Right ventricle myocardium inferior (tissue), 1 donor: ENCODE measurements at regions of chr10 and their contacts with region 1.

Region 1: GRCh38 chr10:132223156-132223590 is 36.4 kb downstream of the DPYSL4 start:
- DNase-seq: peak; percentile 85
- ATAC-seq: peak; percentile 92

Region 2: DNA sequence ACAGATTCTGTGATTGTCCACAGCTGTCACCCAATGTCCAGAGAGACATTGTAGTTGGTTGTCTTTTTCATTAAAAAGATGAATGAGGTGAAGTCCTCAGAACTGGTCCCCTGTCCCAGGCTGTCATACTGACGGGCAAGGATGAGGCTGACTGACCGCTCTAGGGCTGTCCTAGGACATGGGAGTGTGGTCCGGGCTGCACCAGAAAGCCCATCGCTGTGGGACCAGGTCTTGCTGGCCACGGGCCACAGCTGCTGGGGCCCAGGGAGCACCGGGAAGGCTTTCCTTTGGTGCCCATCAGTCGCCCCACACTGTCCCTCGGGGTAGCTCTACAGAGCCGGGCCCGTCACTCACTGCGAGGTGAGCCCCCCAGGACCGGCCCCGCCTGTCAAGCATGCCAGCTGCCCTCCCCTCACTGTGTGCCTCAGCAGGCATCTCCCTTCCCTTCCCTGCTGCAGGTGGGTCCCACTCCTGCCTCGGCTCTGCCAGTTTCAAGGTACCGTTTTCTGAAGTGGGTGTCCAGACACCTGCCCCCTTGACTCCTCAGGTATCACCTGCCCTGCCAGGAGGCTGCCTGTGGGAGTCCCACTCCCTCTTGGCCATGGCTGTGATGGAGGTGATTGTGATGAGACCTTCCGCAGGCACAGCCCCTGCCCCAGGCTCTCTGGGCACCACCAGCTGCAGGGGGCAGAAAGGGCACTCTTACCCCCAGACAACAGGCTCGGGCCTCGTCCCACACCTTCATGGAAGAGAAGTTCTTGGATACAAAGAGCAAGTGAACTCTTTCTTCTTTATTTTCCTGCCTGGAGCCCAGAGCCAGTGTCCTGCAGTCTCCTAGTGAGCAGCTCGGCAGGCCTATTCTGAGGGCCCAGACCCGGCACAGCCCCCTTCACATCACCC is 130.5 kb after region 1 on chr10:
- intact Hi-C with region 1: loop called (anchors 1 kb)
- DNase-seq: no peak
- ATAC-seq: no peak

Region 3: DNA sequence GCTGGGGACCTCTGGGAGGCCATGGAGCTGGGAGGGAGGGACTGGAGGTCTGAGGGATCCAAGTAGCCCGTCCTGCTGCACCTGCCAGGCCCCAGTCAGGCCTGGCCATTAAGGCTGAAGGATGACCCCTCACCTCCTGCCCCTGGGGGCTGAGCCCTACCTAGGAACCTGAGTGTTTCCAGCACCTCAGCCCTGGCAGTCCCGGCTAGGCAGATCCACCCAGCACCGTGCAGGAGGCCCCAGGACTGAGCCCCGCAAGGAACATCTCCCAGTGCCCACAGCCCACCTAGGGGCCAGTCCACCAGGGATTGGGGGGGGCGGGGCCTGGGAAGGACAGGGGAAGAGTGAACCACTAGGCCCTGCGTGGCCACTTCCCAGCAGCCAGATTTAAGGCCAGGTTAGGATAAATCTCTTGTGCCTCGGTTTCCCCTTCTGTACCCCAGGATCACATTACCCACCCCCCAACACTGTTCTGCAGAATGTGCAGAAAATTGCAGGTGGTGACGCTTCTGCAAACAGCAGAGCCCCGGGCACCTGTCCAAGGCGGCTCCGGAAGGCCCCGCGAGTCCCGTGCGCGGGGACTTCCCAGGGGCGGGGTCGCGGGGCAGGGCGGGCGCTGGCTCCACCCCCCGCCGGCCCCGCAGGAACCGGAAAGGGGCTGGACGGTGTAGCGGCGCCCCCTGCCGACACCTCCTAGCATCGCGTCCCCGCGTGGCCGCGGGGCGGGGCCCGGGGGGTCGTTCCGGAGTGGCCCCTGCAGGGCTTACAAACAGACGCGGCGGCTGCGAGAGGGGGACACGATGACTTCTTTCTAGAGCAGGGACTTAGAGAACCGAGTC is 229.7 kb after region 1 on chr10:
- intact Hi-C with region 1: loop called (anchors 2 kb)
- DNase-seq: peak; percentile 88
- ATAC-seq: peak; percentile 84

Region 4: DNA sequence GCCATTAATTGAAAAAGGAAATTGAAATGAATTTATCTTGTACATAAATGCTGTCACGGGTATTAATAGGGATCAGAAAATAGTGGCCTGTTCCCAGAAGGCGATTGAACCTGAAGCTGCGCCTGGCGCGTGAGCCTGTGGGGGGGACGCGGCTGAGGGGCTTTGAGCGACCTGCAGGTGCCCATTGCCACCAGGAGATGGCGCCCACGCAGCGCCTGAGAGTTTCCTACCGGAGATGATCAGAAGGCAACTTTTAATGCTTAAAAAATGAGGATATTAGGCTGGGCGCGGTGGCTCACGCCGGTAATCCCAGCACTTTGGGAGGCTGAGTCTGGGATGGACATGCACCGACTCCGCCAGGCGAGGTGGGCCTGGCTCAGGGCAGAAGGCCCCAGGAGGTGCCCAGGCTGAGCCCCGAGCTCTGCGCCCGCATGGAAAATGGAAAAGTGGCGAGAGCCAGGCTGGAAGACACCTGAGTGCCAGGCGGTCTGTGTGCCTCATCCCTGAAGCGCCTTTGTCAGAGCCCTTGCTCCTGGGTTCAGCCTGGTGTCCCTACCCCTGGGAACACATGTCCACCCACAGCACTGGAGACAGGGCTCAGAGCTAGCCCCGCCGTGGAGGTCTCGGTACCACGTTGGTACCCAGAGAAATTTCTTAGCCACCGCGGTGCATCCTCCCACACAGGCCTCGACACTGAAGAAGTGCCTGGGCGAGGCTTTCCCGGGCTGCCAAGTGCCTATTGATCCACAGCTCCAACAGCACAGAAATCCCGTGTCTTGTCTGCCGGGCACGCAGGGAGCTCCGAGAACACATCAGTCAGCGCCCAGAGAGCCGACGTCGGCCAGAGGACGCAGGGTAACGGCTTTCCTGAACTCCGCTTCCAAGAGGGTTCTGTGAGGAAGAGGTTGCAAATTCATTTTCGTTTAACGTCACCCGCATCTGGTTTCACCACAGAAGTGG is 431.8 kb after region 1 on chr10:
- intact Hi-C with region 1: no loop called
- DNase-seq: peak; percentile 87
- ATAC-seq: no peak